Breast epithelium (tissue), 4 donors: ENCODE measurements at regions of chr9 and their contacts with region 1.

Region 1: GRCh38 chr9:31005086-31005665 is 1379.3 kb upstream of the ACO1 start:
- DNase-seq: no peak
- H3K4me3 ChIP-seq: no peak overlapping the region
- H3K27ac ChIP-seq: no peak overlapping the region
- H3K4me1 ChIP-seq: no peaks in the 10 kb centered on the region
- H3K27me3 ChIP-seq: no peaks in the 10 kb centered on the region
- CTCF ChIP-seq: no peak
- POLR2A ChIP-seq: no peak

Region 2: DNA sequence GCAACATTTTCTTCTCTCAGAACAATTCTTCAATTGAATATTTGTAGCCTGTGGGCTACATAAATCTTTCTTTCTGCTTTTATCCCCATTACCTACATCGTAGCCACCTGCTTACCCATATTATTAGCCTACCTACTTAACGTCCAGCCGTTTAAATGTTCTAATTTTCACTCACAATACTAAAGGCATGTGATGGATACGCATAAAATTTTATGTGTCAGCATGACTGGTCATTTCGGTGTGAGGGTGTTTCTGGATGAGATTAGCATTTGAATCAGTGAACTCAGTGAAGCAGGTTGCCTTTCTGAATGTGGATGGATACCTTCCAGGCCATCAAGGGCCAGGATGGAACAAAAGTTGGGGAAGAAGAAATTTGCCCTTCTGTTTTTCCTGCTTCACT is 343.3 kb before region 1 on chr9:
- intact Hi-C with region 1: no loop called
- DNase-seq: no peak
- H3K4me3 ChIP-seq: no peak overlapping the region
- H3K27ac ChIP-seq: no peak overlapping the region
- H3K4me1 ChIP-seq: no peaks in the 10 kb centered on the region
- H3K27me3 ChIP-seq: no peaks in the 10 kb centered on the region
- CTCF ChIP-seq: no peak
- POLR2A ChIP-seq: no peak

Region 3: GRCh38 chr9:31065691-31066090 is 60.5 kb after region 1 on chr9:
- intact Hi-C with region 1: no loop called
- DNase-seq: no peak
- H3K4me3 ChIP-seq: no peak overlapping the region
- H3K27ac ChIP-seq: no peak overlapping the region
- H3K4me1 ChIP-seq: no peaks in the 10 kb centered on the region
- H3K27me3 ChIP-seq: no peaks in the 10 kb centered on the region
- CTCF ChIP-seq: no peak
- POLR2A ChIP-seq: no peak

Region 4: DNA sequence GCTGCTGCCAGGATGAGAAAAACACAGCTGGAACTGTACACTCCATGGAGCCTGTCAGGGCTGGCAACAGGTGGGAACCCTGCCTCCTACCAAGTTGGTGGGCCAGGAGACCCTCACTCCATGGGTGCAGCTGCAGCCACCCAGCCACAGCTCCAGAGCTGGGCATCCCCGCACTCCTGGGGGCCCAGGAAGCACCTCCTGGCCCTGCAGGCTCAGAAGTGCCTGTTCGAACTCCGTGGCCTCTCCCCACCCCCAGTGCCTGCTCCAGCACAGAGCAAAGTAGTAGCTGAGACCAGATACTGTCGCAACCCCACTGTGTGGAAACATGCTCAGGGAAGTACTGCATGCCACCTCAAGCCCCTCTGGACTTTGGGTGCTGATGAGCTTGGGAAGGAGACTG is 815.2 kb after region 1 on chr9:
- intact Hi-C with region 1: loop called (anchors 5 kb)
- DNase-seq: no peak
- H3K4me3 ChIP-seq: no peak overlapping the region
- H3K27ac ChIP-seq: no peak overlapping the region
- H3K4me1 ChIP-seq: no peaks in the 10 kb centered on the region
- H3K27me3 ChIP-seq: no peaks in the 10 kb centered on the region
- CTCF ChIP-seq: no peak
- POLR2A ChIP-seq: no peak

Region 5: DNA sequence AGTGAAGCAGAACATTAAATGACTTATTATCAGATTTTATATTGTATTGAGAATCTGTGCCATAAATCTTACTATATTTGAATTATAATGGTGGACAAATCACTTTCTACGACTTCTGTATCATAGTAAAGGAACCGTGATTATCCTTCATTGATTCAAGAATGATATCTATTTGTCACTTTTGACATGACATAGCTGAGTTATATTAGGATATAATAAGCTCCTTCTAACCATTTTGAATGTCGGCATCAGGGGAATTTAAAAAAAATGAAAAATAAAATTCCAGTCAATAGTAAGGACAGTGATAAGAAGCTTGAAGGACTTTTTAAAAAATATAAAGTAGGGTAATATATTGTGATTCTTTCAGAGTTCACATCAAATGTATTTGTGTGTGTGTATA is 1040.3 kb after region 1 on chr9:
- intact Hi-C with region 1: no loop called
- DNase-seq: no peak
- H3K4me3 ChIP-seq: no peak overlapping the region
- H3K27ac ChIP-seq: no peak overlapping the region
- H3K4me1 ChIP-seq: no peaks in the 10 kb centered on the region
- H3K27me3 ChIP-seq: no peaks in the 10 kb centered on the region
- CTCF ChIP-seq: no peak
- POLR2A ChIP-seq: no peak